ENCODE measurements at regions of chr7 and their contacts with region 1.

Region 1: GRCh38 chr7:145036604-145037405 is 201.0 kb upstream of the TPK1 start:
- DNase-seq: peak; percentile 69
- H3K4me3 Mint-ChIP-seq: peak overlapping the region; percentile 37
- H3K27ac Mint-ChIP-seq: no peak overlapping the region
- H3K4me1 Mint-ChIP-seq: no peaks in the 10 kb centered on the region
- H3K27me3 Mint-ChIP-seq: no peaks in the 10 kb centered on the region
- CTCF ChIP-seq: peak; percentile 77

Region 2: GRCh38 chr7:145065473-145065872 is 28.7 kb after region 1 on chr7:
- CTCF ChIA-PET with region 1: no interaction called
- POLR2A ChIA-PET with region 1: no interaction called
- intact Hi-C with region 1: no loop called
- DNase-seq: no peak
- H3K4me3 Mint-ChIP-seq: no peak overlapping the region
- H3K27ac Mint-ChIP-seq: no peak overlapping the region
- H3K4me1 Mint-ChIP-seq: no peaks in the 10 kb centered on the region
- H3K27me3 Mint-ChIP-seq: no peaks in the 10 kb centered on the region
- CTCF ChIP-seq: no peak

Region 3: GRCh38 chr7:145848691-145849090 is 811.9 kb after region 1 on chr7:
- CTCF ChIA-PET with region 1: interaction called, 9 read pairs
- POLR2A ChIA-PET with region 1: no interaction called
- intact Hi-C with region 1: loop called (anchors 1 kb)
- DNase-seq: peak; percentile 27
- H3K4me3 Mint-ChIP-seq: no peak overlapping the region
- H3K27ac Mint-ChIP-seq: no peak overlapping the region
- H3K4me1 Mint-ChIP-seq: no peaks in the 10 kb centered on the region
- H3K27me3 Mint-ChIP-seq: peaks cover 25% of the 10 kb centered on the region
- CTCF ChIP-seq: peak; percentile 48

Region 4: DNA sequence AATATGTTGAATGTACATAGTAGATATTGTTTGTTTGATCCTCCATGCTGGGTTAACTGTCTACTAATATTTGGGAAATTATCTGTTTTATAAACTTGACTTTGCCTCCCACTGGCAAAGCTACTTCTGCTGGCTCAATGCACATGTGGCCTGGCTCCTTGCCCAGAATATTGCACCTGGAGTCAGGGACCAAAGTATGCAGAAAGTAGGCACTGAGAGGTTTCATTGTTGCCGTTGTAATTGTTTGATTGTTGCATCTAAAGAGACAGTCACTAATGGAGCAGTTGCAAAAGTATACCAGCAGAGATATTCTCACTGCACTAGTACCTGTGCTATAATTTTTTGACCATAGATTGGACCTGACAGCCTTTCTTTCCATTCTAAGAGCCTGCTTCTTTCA is 942.0 kb after region 1 on chr7:
- CTCF ChIA-PET with region 1: no interaction called
- POLR2A ChIA-PET with region 1: no interaction called
- intact Hi-C with region 1: no loop called
- DNase-seq: peak; percentile 45
- H3K4me3 Mint-ChIP-seq: no peak overlapping the region
- H3K27ac Mint-ChIP-seq: no peak overlapping the region
- H3K4me1 Mint-ChIP-seq: no peaks in the 10 kb centered on the region
- H3K27me3 Mint-ChIP-seq: no peaks in the 10 kb centered on the region
- CTCF ChIP-seq: no peak

Measured in MCF 10A (cell line).